ENCODE measurements at regions of chr10 and their contacts with region 1.

Region 1: DNA sequence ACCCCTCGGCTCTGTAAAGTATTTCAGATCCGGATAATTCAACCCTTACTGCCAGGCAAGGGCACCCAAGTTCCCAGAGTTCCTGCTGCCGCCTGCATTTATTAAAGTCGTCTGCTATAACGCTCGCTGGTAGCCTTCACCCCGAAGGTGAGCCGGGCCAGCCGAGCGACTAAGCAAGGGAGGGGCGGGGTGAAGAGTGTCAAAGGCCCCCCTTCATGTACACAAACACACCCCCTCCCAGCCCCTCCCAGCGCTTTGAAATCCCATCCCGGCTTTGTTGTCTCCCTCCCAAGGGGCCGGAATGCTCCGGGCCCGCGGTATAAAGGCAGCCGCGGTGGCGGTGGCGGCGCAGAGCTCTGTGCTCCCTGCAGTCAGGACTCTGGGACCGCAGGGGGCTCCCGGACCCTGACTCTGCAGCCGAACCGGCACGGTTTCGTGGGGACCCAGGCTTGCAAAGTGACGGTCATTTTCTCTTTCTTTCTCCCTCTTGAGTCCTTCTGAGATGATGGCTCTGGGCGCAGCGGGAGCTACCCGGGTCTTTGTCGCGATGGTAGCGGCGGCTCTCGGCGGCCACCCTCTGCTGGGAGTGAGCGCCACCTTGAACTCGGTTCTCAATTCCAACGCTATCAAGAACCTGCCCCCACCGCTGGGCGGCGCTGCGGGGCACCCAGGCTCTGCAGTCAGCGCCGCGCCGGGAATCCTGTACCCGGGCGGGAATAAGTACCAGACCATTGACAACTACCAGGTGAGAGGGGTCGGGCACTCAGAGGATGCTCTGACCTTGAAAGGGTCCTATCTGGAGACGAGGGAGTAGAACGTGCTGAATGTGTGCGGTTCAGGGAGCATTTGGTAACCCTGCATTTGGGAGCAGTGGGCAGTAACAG is at the start of gene DKK1:
- DNase-seq: peak; percentile 84 to 93
- H3K4me3 ChIP-seq: peak within 1 kb of the TSS; percentile 81
- H3K27ac ChIP-seq: peak within 1 kb of the TSS; percentile 27
- H3K4me1 ChIP-seq: peaks cover 49% of the 10 kb centered on the region
- H3K27me3 ChIP-seq: no peaks in the 10 kb centered on the region
- CTCF ChIP-seq: peak; percentile 99
- total RNA-seq, gene DKK1: 75.2 and 106 TPM in 2 replicates

Region 2: GRCh38 chr10:51783941-51784340 is 530.2 kb before region 1 on chr10:
- CTCF ChIA-PET with region 1: no interaction called
- POLR2A ChIA-PET with region 1: no interaction called
- intact Hi-C with region 1: no loop called
- DNase-seq: no peak
- H3K4me3 ChIP-seq: no peak overlapping the region
- H3K27ac ChIP-seq: no peak overlapping the region
- H3K4me1 ChIP-seq: no peaks in the 10 kb centered on the region
- H3K27me3 ChIP-seq: no peaks in the 10 kb centered on the region
- CTCF ChIP-seq: no peak

Region 3: DNA sequence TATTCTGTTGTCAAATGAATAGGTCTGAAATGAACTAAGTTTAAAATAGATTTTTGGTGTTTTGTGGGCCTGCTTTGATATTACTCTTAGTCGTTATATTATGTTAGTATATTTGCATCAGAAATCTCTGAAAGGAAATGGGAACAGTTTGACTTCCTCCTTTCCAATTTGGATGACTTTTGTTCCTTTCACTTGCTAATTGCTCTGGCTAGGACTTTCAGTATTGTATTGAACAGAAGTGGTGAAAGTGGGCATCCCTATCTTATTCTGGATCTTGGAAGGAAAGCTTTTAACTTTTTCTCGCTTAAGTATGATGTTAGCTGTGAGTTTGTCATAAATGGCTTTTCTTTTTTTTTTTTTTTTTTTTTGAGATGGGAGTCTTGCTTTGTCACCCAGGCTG is 273.7 kb before region 1 on chr10:
- CTCF ChIA-PET with region 1: no interaction called
- POLR2A ChIA-PET with region 1: no interaction called
- intact Hi-C with region 1: no loop called
- DNase-seq: no peak
- H3K4me3 ChIP-seq: no peak overlapping the region
- H3K27ac ChIP-seq: no peak overlapping the region
- H3K4me1 ChIP-seq: no peaks in the 10 kb centered on the region
- H3K27me3 ChIP-seq: no peaks in the 10 kb centered on the region
- CTCF ChIP-seq: no peak

Region 4: DNA sequence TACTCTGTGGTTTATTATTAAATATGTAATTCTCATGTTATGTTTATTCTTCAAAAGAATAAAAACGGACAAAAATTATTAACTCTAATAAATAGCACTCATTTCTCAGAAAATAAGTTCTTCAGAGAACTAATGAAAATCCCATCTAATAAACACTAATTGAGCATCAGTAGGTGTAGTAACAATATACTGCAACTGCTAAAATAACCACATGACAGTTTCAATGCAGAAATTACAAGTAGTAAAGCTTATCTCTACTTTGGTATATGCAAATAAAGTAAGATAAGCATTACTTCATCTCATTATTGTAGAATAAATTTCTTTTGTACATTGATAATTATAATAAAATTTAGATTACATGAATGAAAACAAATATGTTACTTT is 56.5 kb before region 1 on chr10:
- CTCF ChIA-PET with region 1: no interaction called
- POLR2A ChIA-PET with region 1: interaction called, 12 read pairs
- intact Hi-C with region 1: no loop called
- DNase-seq: no peak
- H3K4me3 ChIP-seq: peak overlapping the region; percentile 16; the same call in 1 of the 2 replicates
- H3K27ac ChIP-seq: peak overlapping the region; percentile 79
- H3K4me1 ChIP-seq: peaks cover 23% of the 10 kb centered on the region
- H3K27me3 ChIP-seq: no peaks in the 10 kb centered on the region
- CTCF ChIP-seq: no peak

Region 5: DNA sequence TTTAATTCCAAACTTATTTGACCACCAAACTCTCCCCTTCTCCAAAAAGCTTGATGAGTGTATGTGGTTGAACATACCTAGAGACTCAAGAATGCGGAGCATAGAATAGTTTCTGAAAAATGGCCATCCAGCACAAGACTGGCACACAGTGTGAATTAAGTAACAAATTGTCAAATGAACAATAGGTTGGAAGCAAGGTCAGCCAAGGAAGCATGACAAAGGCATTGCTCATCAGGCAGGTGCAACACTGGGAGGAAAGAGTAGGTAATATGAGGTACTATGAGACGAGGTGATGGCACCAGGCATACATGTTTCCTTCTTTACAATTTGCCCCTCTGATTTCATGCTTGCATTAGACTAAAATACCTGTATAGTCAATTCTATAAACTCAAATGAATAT is 73.6 kb after region 1 on chr10:
- CTCF ChIA-PET with region 1: interaction called, 14 read pairs
- POLR2A ChIA-PET with region 1: interaction called, 7 read pairs
- intact Hi-C with region 1: loop called (anchors 2 kb)
- DNase-seq: peak; percentile 66 to 77
- H3K4me3 ChIP-seq: no peak overlapping the region
- H3K27ac ChIP-seq: no peak overlapping the region
- H3K4me1 ChIP-seq: peaks cover 10% of the 10 kb centered on the region
- H3K27me3 ChIP-seq: no peaks in the 10 kb centered on the region
- CTCF ChIP-seq: no peak

Region 6: DNA sequence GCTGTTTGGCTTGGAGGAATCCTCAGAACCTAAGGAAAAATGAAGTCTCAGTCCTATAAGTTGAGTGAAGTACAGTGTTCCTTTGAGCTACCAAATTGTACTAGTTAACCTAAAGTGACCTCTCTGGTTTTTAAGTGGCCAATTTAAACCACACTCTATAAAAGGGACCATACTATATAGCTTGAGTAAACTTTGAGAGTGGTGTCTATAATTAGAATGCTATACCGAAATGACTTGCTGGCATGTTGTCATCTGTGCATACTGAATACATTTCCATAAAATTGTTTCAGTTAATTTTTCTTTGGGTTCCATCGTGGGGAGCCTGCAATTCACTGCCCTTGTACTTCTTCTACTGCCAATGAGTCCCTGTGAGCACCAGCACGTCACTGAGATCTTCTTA is 151.0 kb after region 1 on chr10:
- CTCF ChIA-PET with region 1: no interaction called
- POLR2A ChIA-PET with region 1: interaction called, 12 read pairs
- intact Hi-C with region 1: no loop called
- DNase-seq: no peak
- H3K4me3 ChIP-seq: no peak overlapping the region
- H3K27ac ChIP-seq: no peak overlapping the region
- H3K4me1 ChIP-seq: peaks cover 12% of the 10 kb centered on the region
- H3K27me3 ChIP-seq: no peaks in the 10 kb centered on the region
- CTCF ChIP-seq: no peak

Region 7: DNA sequence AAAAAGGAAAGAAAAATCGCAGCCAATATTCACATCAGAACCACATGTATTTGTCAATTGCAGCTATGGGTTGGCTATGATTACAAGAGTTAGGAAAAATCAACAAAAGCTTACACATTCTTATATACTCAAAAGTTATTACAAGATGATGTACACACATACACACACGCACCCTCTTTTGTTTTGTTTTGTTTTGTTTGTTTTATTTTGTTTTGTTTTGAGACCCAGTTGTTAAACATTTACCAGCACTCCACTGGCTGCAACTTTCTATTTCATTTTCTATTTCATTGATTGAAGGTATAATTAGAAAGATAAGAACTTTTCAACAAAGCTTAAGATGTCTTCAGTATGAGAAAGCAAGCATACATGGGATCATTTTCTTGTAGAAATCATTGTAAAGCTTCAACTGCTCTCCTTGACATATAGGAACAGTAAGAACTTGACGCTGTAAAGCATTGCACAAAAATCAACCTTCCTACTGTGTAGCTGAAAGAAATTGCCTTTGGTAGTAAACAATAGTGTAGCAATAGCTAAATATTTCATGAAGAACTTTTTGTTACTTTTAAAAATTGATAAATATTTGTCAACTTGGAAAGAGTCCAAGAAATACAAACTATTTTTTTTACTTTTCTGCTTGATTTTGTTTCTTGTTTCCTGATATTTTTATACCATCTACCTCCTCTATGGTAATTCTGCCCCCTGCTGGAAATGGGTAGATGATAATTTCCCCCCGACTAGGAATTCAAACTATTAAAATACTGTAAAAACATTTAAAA is 252.5 kb after region 1 on chr10:
- CTCF ChIA-PET with region 1: interaction called, 10 read pairs
- POLR2A ChIA-PET with region 1: interaction called, 5 read pairs
- intact Hi-C with region 1: loop called (anchors 1 kb)
- DNase-seq: peak; percentile 25 to 60
- H3K4me3 ChIP-seq: no peak overlapping the region
- H3K27ac ChIP-seq: no peak overlapping the region
- H3K4me1 ChIP-seq: peaks cover 7% of the 10 kb centered on the region
- H3K27me3 ChIP-seq: no peaks in the 10 kb centered on the region
- CTCF ChIP-seq: peak; percentile 78